Panc1 (cell line): ENCODE measurements at regions of chr5 and their contacts with region 1.

Region 1: DNA sequence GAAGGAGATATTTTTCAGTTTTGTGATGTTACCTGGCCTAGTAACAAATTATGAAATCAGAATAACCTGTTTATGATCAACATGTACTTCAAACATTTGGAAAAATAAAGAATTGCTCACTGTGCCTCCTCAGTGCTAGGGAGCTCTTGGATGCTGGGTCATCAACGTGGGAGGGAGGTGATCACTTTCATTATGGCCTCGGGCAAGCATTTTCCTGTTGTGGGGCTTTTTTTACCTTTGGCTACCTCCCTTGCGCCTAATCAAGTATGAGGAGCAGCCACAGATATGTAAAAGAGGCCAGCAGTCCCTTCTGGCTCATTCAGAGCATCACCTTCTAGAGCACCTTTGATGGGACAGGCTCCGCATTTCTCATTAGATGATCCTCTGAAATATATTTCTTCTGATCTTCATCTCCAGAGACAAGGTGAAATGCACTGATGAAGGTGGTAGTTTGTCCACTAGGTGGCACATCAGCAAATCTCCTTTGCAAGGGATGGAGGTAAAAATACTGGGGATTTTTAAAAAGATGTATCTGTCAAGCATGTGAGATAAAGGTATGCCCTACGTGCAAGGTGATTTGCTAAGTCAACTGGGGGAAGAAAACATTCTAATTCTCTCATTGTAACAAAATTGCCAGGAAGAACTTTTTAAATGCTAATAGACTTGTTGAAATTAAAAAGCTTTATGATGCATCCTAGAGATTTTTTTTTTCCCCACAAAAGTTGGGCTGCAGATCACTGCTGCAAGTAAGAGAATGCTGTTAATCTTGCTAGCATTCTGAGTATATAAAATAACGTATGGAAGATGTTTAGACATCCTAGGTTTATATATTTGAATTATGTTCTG is 218.2 kb downstream of the MAST4 start:
- DNase-seq: peak; percentile 46
- ATAC-seq: peak; percentile 80; the same call in 1 of the 2 replicates
- H3K4me3 ChIP-seq: no peak overlapping the region; a peak in 1 of 4 replicates
- H3K27ac ChIP-seq: no peak overlapping the region
- H3K4me1 ChIP-seq: no peaks in the 10 kb centered on the region
- H3K27me3 ChIP-seq: peaks cover 2% of the 10 kb centered on the region; the same call in 1 of the 2 replicates
- CTCF ChIP-seq: peak; percentile 78

Region 2: GRCh38 chr5:67156976-67157583 is 342.7 kb after region 1 on chr5:
- CTCF ChIA-PET with region 1: no interaction called
- POLR2A ChIA-PET with region 1: no interaction called
- in situ Hi-C with region 1: no loop called
- intact Hi-C with region 1: loop called (anchors 10 kb)
- DNase-seq: peak; percentile 45
- ATAC-seq: peak; percentile 78
- H3K4me3 ChIP-seq: no peak overlapping the region
- H3K27ac ChIP-seq: no peak overlapping the region
- H3K4me1 ChIP-seq: no peaks in the 10 kb centered on the region
- H3K27me3 ChIP-seq: peaks cover 13% of the 10 kb centered on the region
- CTCF ChIP-seq: peak; percentile 86